Ascending aorta (tissue), 2 donors: ENCODE measurements at regions of chr15 and their contacts with region 1.

Region 1: GRCh38 chr15:68431792-68432401 is at the start of gene ITGA11:
- DNase-seq: peak in 1 of 2 donors; percentile 89
- H3K4me3 ChIP-seq: peak within 1 kb of the TSS; percentile 69 to 83
- H3K27ac ChIP-seq: peak within 1 kb of the TSS; percentile 89 to 93
- H3K4me1 ChIP-seq: peaks cover 3 to 23% of the 10 kb centered on the region in 2 donors
- H3K27me3 ChIP-seq: no peaks in the 10 kb centered on the region
- CTCF ChIP-seq: no peak
- total RNA-seq, gene ITGA11: 136 TPM

Region 2: GRCh38 chr15:68418611-68419161 is 13.2 kb before region 1 on chr15:
- intact Hi-C with region 1: no loop called
- DNase-seq: peak in 1 of 2 donors; percentile 61
- H3K4me3 ChIP-seq: no peak overlapping the region
- H3K27ac ChIP-seq: peak overlapping the region; percentile 62 to 68
- H3K4me1 ChIP-seq: peaks cover 10 to 33% of the 10 kb centered on the region in 2 donors
- H3K27me3 ChIP-seq: no peaks in the 10 kb centered on the region
- CTCF ChIP-seq: no peak

Region 3: DNA sequence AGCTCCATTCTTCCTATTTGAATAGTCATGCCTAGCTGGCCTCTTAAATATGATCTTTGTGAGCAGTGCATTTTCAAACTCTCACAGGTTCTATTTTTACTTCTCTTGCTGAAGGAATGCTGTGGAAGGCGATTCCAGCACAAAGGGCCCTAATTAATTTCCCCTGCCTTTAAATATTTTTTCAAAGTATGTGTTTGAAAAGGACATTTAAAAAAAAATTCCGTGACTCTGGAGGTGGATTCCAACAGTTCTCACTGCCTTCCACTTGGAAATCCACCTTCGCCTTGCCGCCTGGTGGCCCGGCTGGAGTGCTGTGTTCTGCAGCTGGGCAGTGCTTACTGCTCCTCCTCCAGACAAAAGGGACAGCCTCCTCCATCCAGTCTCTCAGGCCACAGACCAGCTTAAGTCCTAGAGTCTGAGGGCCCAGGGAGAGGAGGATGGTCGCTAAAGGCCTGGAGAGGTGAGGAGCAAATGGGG is 85.4 kb after region 1 on chr15:
- intact Hi-C with region 1: loop called (anchors 2 kb)
- DNase-seq: peak in 1 of 2 donors; percentile 86
- H3K4me3 ChIP-seq: no peak overlapping the region
- H3K27ac ChIP-seq: peak overlapping the region; percentile 83 to 94
- H3K4me1 ChIP-seq: peaks cover 11 to 19% of the 10 kb centered on the region in 2 donors
- H3K27me3 ChIP-seq: no peaks in the 10 kb centered on the region
- CTCF ChIP-seq: peak; percentile 53 to 65 (median 59)

Region 4: GRCh38 chr15:68543165-68544008 is 111.5 kb after region 1 on chr15:
- intact Hi-C with region 1: loop called (anchors 5 kb)
- DNase-seq: peak in 1 of 2 donors; percentile 89
- H3K4me3 ChIP-seq: no peak overlapping the region
- H3K27ac ChIP-seq: peak overlapping the region; percentile 45 to 69
- H3K4me1 ChIP-seq: peaks cover 5 to 18% of the 10 kb centered on the region in 2 donors
- H3K27me3 ChIP-seq: no peaks in the 10 kb centered on the region
- CTCF ChIP-seq: no peak

Region 5: DNA sequence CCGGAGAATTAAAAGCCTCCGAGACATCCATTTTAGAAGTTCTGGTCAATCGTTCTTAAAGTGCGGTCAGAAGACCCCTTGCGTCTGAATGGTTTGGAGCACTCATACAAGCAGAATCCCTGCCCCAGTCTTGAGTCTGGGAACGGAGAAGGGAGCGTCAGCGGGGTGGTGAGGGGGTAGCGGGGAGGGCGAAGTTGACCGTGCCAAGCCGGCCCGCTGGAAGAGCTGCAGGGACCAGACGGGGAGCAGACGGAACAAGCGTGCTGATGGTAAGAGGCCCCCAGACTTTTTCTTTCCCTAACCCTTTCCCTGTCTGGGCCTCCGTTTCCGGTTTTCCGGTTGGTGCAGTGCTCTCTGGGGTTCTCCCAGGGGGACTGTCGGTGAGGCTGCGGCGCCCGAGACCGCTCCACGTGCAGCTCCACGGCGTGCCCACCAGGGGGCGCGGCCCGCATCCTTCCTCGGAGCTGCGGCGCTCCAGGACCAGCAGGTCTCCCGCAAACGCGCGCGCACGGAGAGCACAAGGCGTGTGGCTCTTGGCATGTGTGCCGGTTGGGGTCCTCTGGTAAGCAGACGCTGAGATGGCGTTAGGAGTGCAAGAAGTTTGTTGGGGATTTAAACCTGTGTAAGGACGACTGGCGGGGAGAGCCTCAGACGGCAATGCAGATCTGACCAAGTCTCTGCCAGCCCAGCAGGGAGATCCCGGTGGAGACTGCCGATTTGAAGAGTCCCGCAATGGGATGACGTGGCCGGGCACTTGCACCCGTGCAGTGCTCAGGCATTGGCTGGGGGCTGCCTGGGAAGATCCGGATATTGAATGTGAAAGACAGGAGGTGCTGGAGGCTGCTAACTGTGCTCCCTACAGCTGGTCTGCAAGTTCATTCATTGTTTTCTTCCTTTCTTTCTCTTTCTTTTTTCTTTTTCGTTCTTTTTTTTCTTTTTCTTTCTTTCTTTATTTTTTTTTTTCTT is 127.7 kb after region 1 on chr15:
- intact Hi-C with region 1: no loop called
- DNase-seq: peak in 1 of 2 donors; percentile 87
- H3K4me3 ChIP-seq: peak overlapping the region; percentile 47 to 61
- H3K27ac ChIP-seq: no peak overlapping the region
- H3K4me1 ChIP-seq: peaks cover 3 to 6% of the 10 kb centered on the region in 2 donors
- H3K27me3 ChIP-seq: no peaks in the 10 kb centered on the region
- CTCF ChIP-seq: peak; percentile 94 to 98 (median 97)

Region 6: GRCh38 chr15:68775671-68776476 is 344.0 kb after region 1 on chr15:
- intact Hi-C with region 1: no loop called
- DNase-seq: peak; percentile 25 to 93
- H3K4me3 ChIP-seq: peak overlapping the region in 1 of 2 donors; percentile 34
- H3K27ac ChIP-seq: peak overlapping the region; percentile 82 to 89
- H3K4me1 ChIP-seq: peaks cover 3 to 26% of the 10 kb centered on the region in 2 donors
- H3K27me3 ChIP-seq: no peaks in the 10 kb centered on the region
- CTCF ChIP-seq: no peak